ENCODE measurements at regions of chr12 and their contacts with region 1.

Region 1: GRCh38 chr12:46414591-46415268 is 42.2 kb upstream of the SLC38A2 start:
- DNase-seq: no peak
- H3K4me3 ChIP-seq: no peak overlapping the region
- H3K4me3 Mint-ChIP-seq: no peak overlapping the region
- H3K27ac Mint-ChIP-seq: no peak overlapping the region
- H3K4me1 ChIP-seq: 0 out of 2 replicates have a peak, but pooled peaks cover 3% of the 10 kb centered on the region
- H3K4me1 Mint-ChIP-seq: peaks cover 6% of the 10 kb centered on the region
- H3K27me3 ChIP-seq: no peaks in the 10 kb centered on the region
- H3K27me3 Mint-ChIP-seq: no peaks in the 10 kb centered on the region
- CTCF ChIP-seq: no peak

Region 2: GRCh38 chr12:46483572-46484395 is 69.1 kb after region 1 on chr12:
- CTCF ChIA-PET with region 1: interaction called, 12 read pairs
- POLR2A ChIA-PET with region 1: no interaction called
- intact Hi-C with region 1: no loop called
- DNase-seq: no peak
- H3K4me3 ChIP-seq: no peak overlapping the region
- H3K4me3 Mint-ChIP-seq: no peak overlapping the region
- H3K27ac Mint-ChIP-seq: no peak overlapping the region
- H3K4me1 ChIP-seq: peaks cover 10% of the 10 kb centered on the region
- H3K4me1 Mint-ChIP-seq: peaks cover 5% of the 10 kb centered on the region
- H3K27me3 ChIP-seq: no peaks in the 10 kb centered on the region
- H3K27me3 Mint-ChIP-seq: no peaks in the 10 kb centered on the region
- CTCF ChIP-seq: no peak

Measured in Caco-2 (cell line).